Colonic mucosa (tissue), 4 donors: ENCODE measurements at regions of chr11 and their contacts with region 1.

Region 1: GRCh38 chr11:66222358-66223149 is 45.9 kb upstream of the RAB1B start:
- DNase-seq: peak; percentile 90
- H3K4me3 ChIP-seq: no peak overlapping the region
- H3K27ac ChIP-seq: peak overlapping the region; percentile 27
- H3K4me1 ChIP-seq: no peaks in the 10 kb centered on the region
- H3K27me3 ChIP-seq: no peaks in the 10 kb centered on the region
- CTCF ChIP-seq: peak; percentile 97

Region 2: DNA sequence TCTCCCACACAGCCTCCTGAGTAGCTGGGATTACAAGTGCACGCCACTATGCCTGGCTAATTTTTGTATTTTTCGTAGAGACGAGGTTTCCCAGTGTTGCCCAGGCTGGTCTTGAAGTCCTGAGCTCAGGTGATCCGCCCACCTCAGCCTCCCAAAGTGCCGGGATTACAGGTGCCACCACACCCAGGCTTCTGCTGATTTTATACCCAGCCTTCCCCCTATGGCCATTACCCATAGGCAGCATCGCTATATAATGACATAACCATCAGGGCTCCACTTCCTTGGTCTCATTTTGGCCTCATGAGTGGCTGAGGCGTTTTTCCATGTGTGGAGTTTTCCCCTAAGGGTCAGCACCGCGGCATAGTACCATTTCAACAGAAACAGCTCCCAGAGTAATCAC is 14.7 kb before region 1 on chr11:
- intact Hi-C with region 1: no loop called
- DNase-seq: no peak
- H3K4me3 ChIP-seq: no peak overlapping the region
- H3K27ac ChIP-seq: no peak overlapping the region
- H3K4me1 ChIP-seq: no peaks in the 10 kb centered on the region
- H3K27me3 ChIP-seq: no peaks in the 10 kb centered on the region
- CTCF ChIP-seq: no peak

Region 3: DNA sequence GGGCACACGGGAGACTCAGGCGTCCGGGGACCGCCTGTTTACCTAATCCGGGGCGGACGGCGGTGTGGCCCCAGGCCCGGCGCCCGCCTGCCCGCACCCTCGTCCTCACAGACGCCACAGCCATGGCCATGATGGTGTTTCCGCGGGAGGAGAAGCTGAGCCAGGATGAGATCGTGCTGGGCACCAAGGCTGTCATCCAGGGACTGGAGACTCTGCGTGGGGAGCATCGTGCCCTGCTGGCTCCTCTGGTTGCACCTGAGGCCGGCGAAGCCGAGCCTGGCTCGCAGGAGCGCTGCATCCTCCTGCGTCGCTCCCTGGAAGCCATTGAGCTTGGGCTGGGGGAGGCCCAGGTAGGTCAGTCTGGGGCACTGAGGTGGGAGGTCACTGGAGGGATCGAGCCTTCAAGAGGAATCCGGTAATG is 35.9 kb after region 1 on chr11:
- intact Hi-C with region 1: loop called (anchors 2 kb)
- DNase-seq: no peak
- H3K4me3 ChIP-seq: peak overlapping the region; percentile 95
- H3K27ac ChIP-seq: peak overlapping the region; percentile 84
- H3K4me1 ChIP-seq: peaks cover 6% of the 10 kb centered on the region
- H3K27me3 ChIP-seq: no peaks in the 10 kb centered on the region
- CTCF ChIP-seq: peak; percentile 23

Region 4: GRCh38 chr11:66282468-66283386 is 60.2 kb after region 1 on chr11:
- intact Hi-C with region 1: loop called (anchors 2 kb)
- DNase-seq: peak; percentile 98
- H3K4me3 ChIP-seq: no peak overlapping the region
- H3K27ac ChIP-seq: no peak overlapping the region
- H3K4me1 ChIP-seq: peaks cover 2% of the 10 kb centered on the region
- H3K27me3 ChIP-seq: no peaks in the 10 kb centered on the region
- CTCF ChIP-seq: peak; percentile 95

Region 5: GRCh38 chr11:66344550-66345315 is 122.2 kb after region 1 on chr11 and contains the start of gene BRMS1:
- intact Hi-C with region 1: no loop called
- DNase-seq: peak; percentile 99
- H3K4me3 ChIP-seq: peak within 1 kb of the TSS; percentile 100
- H3K27ac ChIP-seq: peak within 1 kb of the TSS; percentile 77
- H3K4me1 ChIP-seq: peaks cover 25% of the 10 kb centered on the region
- H3K27me3 ChIP-seq: no peaks in the 10 kb centered on the region
- CTCF ChIP-seq: no peak
- total RNA-seq, gene BRMS1: 31.1 to 64.6 TPM